Activated CD4-positive, alpha-beta T cell treated with anti-CD3 and anti-CD28 coated beads for 36 hours (primary cell): ENCODE measurements at regions of chr1 and their contacts with region 1.

Region 1: GRCh38 chr1:110780600-110781484 is 92.1 kb upstream of the CD53 start:
- DNase-seq: peak; percentile 84
- ATAC-seq: peak; percentile 68
- H3K4me3 Mint-ChIP-seq: no peak overlapping the region
- H3K27ac Mint-ChIP-seq: no peak overlapping the region
- H3K4me1 Mint-ChIP-seq: peaks cover 32% of the 10 kb centered on the region
- H3K27me3 Mint-ChIP-seq: no peaks in the 10 kb centered on the region

Region 2: GRCh38 chr1:110407260-110408210 is 373.3 kb before region 1 on chr1 and contains the start of gene LAMTOR5:
- CTCF ChIA-PET with region 1: interaction called, 3 read pairs
- POLR2A ChIA-PET with region 1: no interaction called
- intact Hi-C with region 1: loop called in 1 of 2 experiments (anchors 10 kb)
- DNase-seq: peak; percentile 95
- ATAC-seq: peak; percentile 93
- H3K4me3 Mint-ChIP-seq: peak within 1 kb of the TSS; percentile 98
- H3K27ac Mint-ChIP-seq: peak within 1 kb of the TSS; percentile 100
- H3K4me1 Mint-ChIP-seq: peaks cover 17% of the 10 kb centered on the region
- H3K27me3 Mint-ChIP-seq: no peaks in the 10 kb centered on the region
- total RNA-seq, gene LAMTOR5: 141 to 155 TPM

Region 3: GRCh38 chr1:110605901-110606656 is 174.8 kb before region 1 on chr1 and contains the start of gene KCNA2:
- CTCF ChIA-PET with region 1: interaction called, 44 read pairs
- POLR2A ChIA-PET with region 1: no interaction called
- intact Hi-C with region 1: no loop called
- DNase-seq: peak; percentile 24
- ATAC-seq: peak; percentile 7
- H3K4me3 Mint-ChIP-seq: peak within 1 kb of the TSS; percentile 68
- H3K27ac Mint-ChIP-seq: no peak within 1 kb of the TSS
- H3K4me1 Mint-ChIP-seq: peaks cover 8% of the 10 kb centered on the region
- H3K27me3 Mint-ChIP-seq: peaks cover 48% of the 10 kb centered on the region
- total RNA-seq, gene KCNA2: 0.25 to 0.37 TPM

Region 4: GRCh38 chr1:110756506-110756905 is 24.3 kb before region 1 on chr1:
- CTCF ChIA-PET with region 1: interaction called, 15 read pairs
- POLR2A ChIA-PET with region 1: no interaction called
- intact Hi-C with region 1: no loop called
- DNase-seq: no peak
- ATAC-seq: no peak
- H3K4me3 Mint-ChIP-seq: no peak overlapping the region
- H3K27ac Mint-ChIP-seq: no peak overlapping the region
- H3K4me1 Mint-ChIP-seq: peaks cover 5% of the 10 kb centered on the region
- H3K27me3 Mint-ChIP-seq: peaks cover 5% of the 10 kb centered on the region

Region 5: GRCh38 chr1:110829955-110830553 is 49.2 kb after region 1 on chr1:
- CTCF ChIA-PET with region 1: interaction called, 13 read pairs
- POLR2A ChIA-PET with region 1: no interaction called
- intact Hi-C with region 1: loop called (anchors 2 to 5 kb)
- DNase-seq: no peak
- ATAC-seq: peak; percentile 86
- H3K4me3 Mint-ChIP-seq: no peak overlapping the region
- H3K27ac Mint-ChIP-seq: no peak overlapping the region
- H3K4me1 Mint-ChIP-seq: peaks cover 5% of the 10 kb centered on the region
- H3K27me3 Mint-ChIP-seq: no peaks in the 10 kb centered on the region

Region 6: GRCh38 chr1:110912784-110913183 is 131.9 kb after region 1 on chr1:
- CTCF ChIA-PET with region 1: no interaction called
- POLR2A ChIA-PET with region 1: no interaction called
- intact Hi-C with region 1: no loop called
- DNase-seq: no peak
- ATAC-seq: no peak
- H3K4me3 Mint-ChIP-seq: no peak overlapping the region
- H3K27ac Mint-ChIP-seq: no peak overlapping the region
- H3K4me1 Mint-ChIP-seq: peaks cover 11% of the 10 kb centered on the region
- H3K27me3 Mint-ChIP-seq: no peaks in the 10 kb centered on the region

Region 7: GRCh38 chr1:110986407-110986891 is 205.6 kb after region 1 on chr1:
- CTCF ChIA-PET with region 1: interaction called, 38 read pairs
- POLR2A ChIA-PET with region 1: no interaction called
- intact Hi-C with region 1: no loop called
- DNase-seq: no peak
- ATAC-seq: peak; percentile 61
- H3K4me3 Mint-ChIP-seq: no peak overlapping the region
- H3K27ac Mint-ChIP-seq: no peak overlapping the region
- H3K4me1 Mint-ChIP-seq: peaks cover 9% of the 10 kb centered on the region
- H3K27me3 Mint-ChIP-seq: peaks cover 2% of the 10 kb centered on the region